Heart left ventricle (tissue), 16 donors: ENCODE measurements at regions of chrX and their contacts with region 1.

Region 1: GRCh38 chrX:13487731-13488523 is 81.5 kb upstream of the EGFL6 start:
- DNase-seq: peak in 3 of 5 donors; percentile 23 to 43 (median 30)
- ATAC-seq: peak; percentile 80 to 85 (median 80)
- H3K4me3 ChIP-seq: no peak overlapping the region
- H3K27ac ChIP-seq: peak overlapping the region; percentile 9 to 77 (median 66)
- H3K4me1 ChIP-seq: peaks cover 0 to 22% (median 11%) of the 10 kb centered on the region in 12 donors
- H3K27me3 ChIP-seq: peaks cover 0 to 34% (median 0%) of the 10 kb centered on the region in 9 donors
- CTCF ChIP-seq: peak; percentile 36 to 68 (median 52)
- POLR2A ChIP-seq: no peak

Region 2: GRCh38 chrX:12814420-12814819 is 673.5 kb before region 1 on chrX:
- intact Hi-C with region 1: loop called in 4 of 10 experiments (anchors 5 to 10 kb)
- DNase-seq: peak in 2 of 5 donors; percentile 8 to 20
- ATAC-seq: peak in 1 of 4 donors; percentile 39
- H3K4me3 ChIP-seq: no peak overlapping the region
- H3K27ac ChIP-seq: no peak overlapping the region
- H3K4me1 ChIP-seq: no peaks in the 10 kb centered on the region
- H3K27me3 ChIP-seq: peaks cover 0 to 19% (median 0%) of the 10 kb centered on the region in 9 donors
- CTCF ChIP-seq: peak; percentile 11 to 51 (median 37)
- POLR2A ChIP-seq: no peak

Region 3: GRCh38 chrX:12946838-12947544 is 540.9 kb before region 1 on chrX:
- intact Hi-C with region 1: loop called in 5 of 10 experiments (anchors 1 to 5 kb)
- DNase-seq: peak in 4 of 5 donors; percentile 59 to 62 (median 60)
- ATAC-seq: peak in 3 of 4 donors; percentile 75 to 79 (median 78)
- H3K4me3 ChIP-seq: no peak overlapping the region
- H3K27ac ChIP-seq: peak overlapping the region in 8 of 12 donors; percentile 32 to 77 (median 64)
- H3K4me1 ChIP-seq: peaks cover 0 to 55% (median 14%) of the 10 kb centered on the region in 12 donors
- H3K27me3 ChIP-seq: peaks cover 0 to 9% (median 0%) of the 10 kb centered on the region in 9 donors
- CTCF ChIP-seq: peak; percentile 73 to 97 (median 83)
- POLR2A ChIP-seq: no peak

Region 4: DNA sequence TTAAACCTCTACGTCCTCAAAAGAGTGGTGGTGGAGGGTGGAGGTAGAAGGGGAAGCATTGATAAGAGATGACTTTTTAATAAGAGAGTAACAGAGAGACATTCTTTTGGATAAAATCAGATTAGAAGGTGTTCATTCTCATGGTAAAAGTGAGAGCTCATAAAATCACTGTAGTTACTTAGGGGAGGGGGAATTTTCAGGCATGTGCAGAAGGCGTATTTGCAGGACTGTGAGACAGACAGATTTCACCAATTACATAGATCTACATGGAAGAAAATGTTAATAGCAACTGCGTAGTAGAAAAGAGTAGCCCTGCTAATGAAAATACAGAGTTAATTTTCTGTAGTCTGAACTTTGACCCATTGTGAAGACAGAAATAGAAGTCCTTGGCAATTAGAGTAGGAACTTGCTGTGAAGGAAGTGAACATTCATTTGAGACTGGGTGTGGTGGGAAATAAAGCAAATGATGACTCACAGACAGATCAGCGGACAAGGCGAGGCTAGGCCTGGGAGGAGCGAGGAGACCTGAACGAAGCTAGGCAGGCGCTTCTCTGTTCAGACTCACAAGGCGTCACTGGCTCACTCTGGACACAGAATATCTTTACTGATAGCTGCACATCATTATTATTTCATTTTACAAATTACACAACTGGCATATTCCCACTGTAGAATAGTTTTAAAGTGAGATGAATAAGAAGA is 386.3 kb before region 1 on chrX:
- intact Hi-C with region 1: loop called in 1 of 10 experiments (anchors 10 kb)
- DNase-seq: peak; percentile 60 to 81 (median 67)
- ATAC-seq: peak; percentile 89 to 100 (median 98)
- H3K4me3 ChIP-seq: no peak overlapping the region
- H3K27ac ChIP-seq: peak overlapping the region; percentile 49 to 85 (median 68)
- H3K4me1 ChIP-seq: peaks cover 0 to 48% (median 17%) of the 10 kb centered on the region in 12 donors
- H3K27me3 ChIP-seq: peaks cover 0 to 3% (median 0%) of the 10 kb centered on the region in 9 donors
- CTCF ChIP-seq: no peak
- POLR2A ChIP-seq: no peak

Region 5: DNA sequence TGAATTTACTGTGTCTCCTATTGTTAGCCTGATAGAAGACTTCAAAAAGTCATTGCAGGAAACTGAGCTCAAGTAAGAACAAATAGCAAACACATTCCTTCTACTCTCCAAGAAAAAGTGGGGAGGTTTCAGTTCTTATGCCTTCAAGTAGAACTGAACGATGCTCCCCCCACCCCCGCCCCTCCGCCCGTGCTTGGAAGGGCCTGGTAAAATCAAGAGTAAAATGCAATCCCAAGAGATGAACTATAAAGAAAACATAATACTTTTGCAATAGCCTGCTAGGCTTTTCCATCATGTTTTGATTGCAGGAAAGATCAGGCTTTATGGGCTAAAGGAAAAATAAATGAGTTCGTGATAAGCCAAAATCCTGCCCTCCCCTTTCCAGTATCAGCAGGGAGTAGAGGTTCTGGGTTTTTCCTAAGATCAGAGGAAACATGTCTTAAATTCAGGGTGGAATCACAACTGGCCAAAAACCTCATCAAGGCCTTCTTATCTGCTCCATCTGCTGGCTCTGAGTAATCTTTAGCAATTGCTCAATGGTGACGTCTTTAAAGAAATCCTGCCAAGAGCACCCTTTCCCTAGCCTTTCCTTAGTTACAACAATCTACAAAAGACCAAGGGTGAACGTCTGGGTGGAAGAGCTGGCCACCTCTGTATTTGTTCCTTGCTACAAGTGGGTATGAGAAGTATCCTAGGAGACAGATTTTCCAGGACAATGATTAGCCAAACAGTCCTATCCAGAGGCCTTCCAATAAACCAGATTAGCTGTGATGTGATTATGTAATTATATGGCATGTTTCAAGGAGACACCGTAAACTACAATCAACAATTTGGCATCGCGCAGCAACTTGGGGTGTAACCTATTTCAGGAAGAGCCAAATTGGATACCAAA is 377.2 kb before region 1 on chrX:
- intact Hi-C with region 1: loop called in 3 of 10 experiments (anchors 10 kb)
- DNase-seq: peak in 3 of 5 donors; percentile 38 to 42 (median 38)
- ATAC-seq: peak; percentile 81 to 93 (median 90)
- H3K4me3 ChIP-seq: no peak overlapping the region
- H3K27ac ChIP-seq: peak overlapping the region; percentile 33 to 86 (median 72)
- H3K4me1 ChIP-seq: peaks cover 0 to 29% (median 6%) of the 10 kb centered on the region in 12 donors
- H3K27me3 ChIP-seq: no peaks in the 10 kb centered on the region
- CTCF ChIP-seq: no peak
- POLR2A ChIP-seq: peak in 1 of 2 donors; percentile 15

Region 6: DNA sequence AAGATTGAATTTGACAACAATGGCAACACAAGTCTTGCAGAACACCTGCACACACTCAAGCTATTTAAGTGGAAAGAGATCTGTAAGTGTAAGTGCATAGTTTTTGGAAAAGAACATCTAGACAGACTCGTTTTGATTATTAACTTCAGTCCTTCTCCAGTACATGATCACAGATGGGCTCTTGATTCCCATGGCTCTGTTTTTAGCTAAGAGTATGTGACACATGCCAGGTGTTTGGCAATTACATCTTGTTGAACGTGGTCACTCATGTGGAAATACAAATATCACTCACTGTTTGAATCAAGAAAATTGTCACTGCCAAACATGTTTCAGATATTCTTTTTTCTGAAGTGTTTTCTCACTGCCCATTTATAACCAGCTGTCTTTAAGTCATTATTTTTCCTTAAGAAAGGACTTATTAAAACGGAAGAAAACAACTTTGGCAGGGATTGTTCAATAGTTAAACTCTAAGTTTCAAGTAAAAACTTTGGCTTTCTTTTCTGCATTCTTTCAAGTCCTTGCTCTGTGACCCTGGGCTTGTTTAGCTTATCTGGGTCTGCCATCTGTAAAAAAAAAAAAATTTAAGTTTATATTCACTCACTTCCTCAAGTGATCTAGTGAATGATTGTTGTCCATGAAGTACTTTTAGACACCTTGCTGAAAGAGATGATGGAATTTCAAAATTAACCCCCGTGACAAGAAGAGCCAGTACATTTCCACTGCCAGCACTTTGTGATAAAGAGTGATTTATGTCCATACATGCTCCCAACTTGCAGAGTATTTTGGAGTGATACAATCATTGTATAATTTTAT is 293.4 kb before region 1 on chrX:
- intact Hi-C with region 1: no loop called
- DNase-seq: no peak
- ATAC-seq: no peak
- H3K4me3 ChIP-seq: no peak overlapping the region
- H3K27ac ChIP-seq: peak overlapping the region in 3 of 12 donors; percentile 3 to 29 (median 10)
- H3K4me1 ChIP-seq: peaks cover 0 to 15% (median 0%) of the 10 kb centered on the region in 12 donors
- H3K27me3 ChIP-seq: no peaks in the 10 kb centered on the region
- CTCF ChIP-seq: no peak
- POLR2A ChIP-seq: no peak

Region 7: GRCh38 chrX:13254076-13254785 is 233.7 kb before region 1 on chrX:
- intact Hi-C with region 1: loop called in 3 of 10 experiments (anchors 5 to 10 kb)
- DNase-seq: no peak
- ATAC-seq: peak in 2 of 4 donors; percentile 37 to 58
- H3K4me3 ChIP-seq: no peak overlapping the region
- H3K27ac ChIP-seq: no peak overlapping the region
- H3K4me1 ChIP-seq: peaks cover 0 to 18% (median 0%) of the 10 kb centered on the region in 12 donors
- H3K27me3 ChIP-seq: peaks cover 0 to 9% (median 0%) of the 10 kb centered on the region in 9 donors
- CTCF ChIP-seq: peak in 1 of 12 donors; percentile 18
- POLR2A ChIP-seq: no peak

Region 8: GRCh38 chrX:13357925-13358324 is 130.0 kb before region 1 on chrX:
- intact Hi-C with region 1: loop called in 2 of 10 experiments (anchors 10 kb)
- DNase-seq: no peak
- ATAC-seq: peak in 3 of 4 donors; percentile 40 to 74 (median 51)
- H3K4me3 ChIP-seq: no peak overlapping the region
- H3K27ac ChIP-seq: peak overlapping the region in 5 of 12 donors; percentile 8 to 45 (median 39)
- H3K4me1 ChIP-seq: peaks cover 0 to 14% (median 5%) of the 10 kb centered on the region in 12 donors
- H3K27me3 ChIP-seq: peaks cover 0 to 8% (median 0%) of the 10 kb centered on the region in 9 donors
- CTCF ChIP-seq: no peak
- POLR2A ChIP-seq: no peak